ENCODE measurements at regions of chr17 and their contacts with region 1.

Region 1: DNA sequence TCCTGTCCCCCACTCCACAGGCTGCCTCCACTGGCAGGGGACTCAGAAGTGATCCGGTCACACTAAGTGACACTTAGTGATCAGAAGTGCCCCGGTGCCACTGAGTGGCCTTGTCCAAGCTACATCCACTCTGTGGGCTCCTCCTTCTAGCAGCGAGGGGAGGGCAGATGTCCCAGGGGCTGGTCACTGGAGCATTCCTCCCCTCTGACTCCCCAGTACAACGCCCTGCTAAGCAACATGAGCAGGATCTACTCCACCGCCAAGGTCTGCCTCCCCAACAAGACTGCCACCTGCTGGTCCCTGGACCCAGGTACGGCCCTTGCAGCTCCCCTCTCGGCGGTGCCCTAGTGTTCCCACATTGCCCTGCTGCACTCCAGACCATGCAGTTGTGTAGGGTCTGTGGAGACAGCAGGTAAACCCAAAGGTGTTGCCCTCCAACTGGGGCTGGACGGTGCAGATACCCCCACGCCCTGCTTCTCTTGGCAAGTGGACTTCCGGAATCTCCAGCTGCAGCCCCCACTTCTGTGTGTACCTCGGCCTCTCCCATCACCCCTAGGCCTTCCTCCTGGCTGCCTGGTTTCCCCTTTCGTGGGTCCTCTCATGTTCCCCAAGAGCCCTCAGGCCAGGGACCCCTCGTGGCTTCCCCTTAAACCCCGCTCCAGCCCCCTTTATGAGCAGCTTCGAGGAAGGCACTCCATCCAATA is 2.1 kb downstream of the ACE start:
- DNase-seq: peak; percentile 54 to 87 (median 70)
- H3K4me3 ChIP-seq: no peak overlapping the region
- H3K4me3 Mint-ChIP-seq: peak overlapping the region in 6 of 7 donors; percentile 67 to 87 (median 72)
- H3K27ac ChIP-seq: no peak overlapping the region
- H3K27ac Mint-ChIP-seq: peak overlapping the region in 2 of 8 donors; percentile 51 to 74
- H3K4me1 ChIP-seq: peaks cover 14% of the 10 kb centered on the region
- H3K4me1 Mint-ChIP-seq: peaks cover 14 to 31% (median 14%) of the 10 kb centered on the region in 3 donors
- H3K27me3 ChIP-seq: peaks cover 7% of the 10 kb centered on the region
- H3K27me3 Mint-ChIP-seq: peaks cover 7 to 9% of the 10 kb centered on the region in 2 donors

Region 2: GRCh38 chr17:63434876-63435684 is 43.9 kb before region 1 on chr17:
- CTCF ChIA-PET with region 1: interaction called, 206 read pairs
- POLR2A ChIA-PET with region 1: interaction called, 8 read pairs
- DNase-seq: peak; percentile 33 to 86 (median 58)
- H3K4me3 ChIP-seq: no peak overlapping the region
- H3K4me3 Mint-ChIP-seq: peak overlapping the region; percentile 38 to 81 (median 68)
- H3K27ac ChIP-seq: peak overlapping the region; percentile 38
- H3K27ac Mint-ChIP-seq: peak overlapping the region; percentile 81 to 98 (median 94)
- H3K4me1 ChIP-seq: peaks cover 43% of the 10 kb centered on the region
- H3K4me1 Mint-ChIP-seq: peaks cover 32 to 77% (median 39%) of the 10 kb centered on the region in 3 donors
- H3K27me3 ChIP-seq: no peaks in the 10 kb centered on the region
- H3K27me3 Mint-ChIP-seq: no peaks in the 10 kb centered on the region

Region 3: DNA sequence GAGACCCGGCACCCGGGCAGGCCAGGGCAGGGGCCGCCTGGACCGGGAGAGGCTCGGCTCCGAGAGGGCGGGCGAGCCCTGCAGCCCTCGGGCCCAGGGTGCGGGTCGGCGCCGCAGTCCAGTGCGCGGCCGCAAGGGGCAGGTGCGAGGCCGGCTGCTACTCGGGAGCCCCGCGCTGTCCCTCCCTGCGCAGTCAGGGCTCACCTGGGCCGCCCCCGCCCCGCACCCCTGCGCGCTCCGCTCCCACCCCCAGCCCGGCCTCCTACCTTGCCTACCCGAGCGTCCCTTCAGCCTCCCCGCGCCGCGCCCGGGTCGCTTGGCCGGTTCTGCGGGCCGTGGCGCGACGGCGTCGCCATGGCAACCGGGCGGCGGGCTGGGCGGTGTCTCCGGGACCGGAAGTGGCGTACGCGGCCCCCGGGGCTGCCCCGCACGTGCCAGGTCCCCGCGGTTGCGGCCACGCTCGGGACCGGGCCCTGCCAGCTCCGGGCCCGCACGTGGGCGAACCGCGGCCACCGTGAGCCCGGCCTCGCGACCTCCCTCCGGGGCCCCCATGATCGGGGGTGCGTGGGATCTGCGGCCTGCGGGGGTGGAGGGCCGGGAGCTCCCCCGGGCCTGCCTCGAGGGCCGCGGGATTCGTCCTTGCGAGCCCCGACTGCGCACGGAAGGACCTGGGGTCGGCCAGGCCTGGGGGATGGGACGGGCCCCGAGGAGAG is 32.8 kb before region 1 on chr17 and contains the start of gene CYB561:
- CTCF ChIA-PET with region 1: interaction called, 60 read pairs
- POLR2A ChIA-PET with region 1: interaction called, 19 read pairs
- DNase-seq: peak; percentile 59 to 86 (median 75)
- H3K4me3 ChIP-seq: peak within 1 kb of the TSS; percentile 65
- H3K4me3 Mint-ChIP-seq: peak within 1 kb of the TSS; percentile 82 to 98 (median 84)
- H3K27ac ChIP-seq: peak within 1 kb of the TSS; percentile 87
- H3K27ac Mint-ChIP-seq: peak within 1 kb of the TSS; percentile 90 to 99 (median 96)
- H3K4me1 ChIP-seq: peaks cover 20% of the 10 kb centered on the region
- H3K4me1 Mint-ChIP-seq: peaks cover 24 to 61% (median 36%) of the 10 kb centered on the region in 3 donors
- H3K27me3 ChIP-seq: no peaks in the 10 kb centered on the region
- H3K27me3 Mint-ChIP-seq: peaks cover 0 to 4% of the 10 kb centered on the region in 2 donors
- total RNA-seq, gene CYB561: 14.3 to 16.6 TPM

Measured in CD8-positive, alpha-beta memory T cell (primary cell).